A549 (cell line): ENCODE measurements at regions of chr20 and their contacts with region 1.

Region 1: GRCh38 chr20:47501483-47502270 is at the start of gene NCOA3:
- DNase-seq: peak; percentile 95 to 96
- ATAC-seq: peak; percentile 94 to 98
- H3K4me3 ChIP-seq: peak within 1 kb of the TSS; percentile 67
- H3K27ac ChIP-seq: peak within 1 kb of the TSS; percentile 91 to 98
- H3K4me1 ChIP-seq: peaks cover 33% of the 10 kb centered on the region
- CTCF ChIP-seq: no peak; the same call in 2 of the 3 replicates
- EP300 ChIP-seq: no peak; a peak in 1 of 5 replicates
- POLR2A ChIP-seq: peak; percentile 91
- RAD21 ChIP-seq: peak; percentile 28 to 60; a peak in 4 of 5 replicates
- polyA plus RNA-seq, gene NCOA3: 135 and 136 TPM in 2 replicates

Region 2: DNA sequence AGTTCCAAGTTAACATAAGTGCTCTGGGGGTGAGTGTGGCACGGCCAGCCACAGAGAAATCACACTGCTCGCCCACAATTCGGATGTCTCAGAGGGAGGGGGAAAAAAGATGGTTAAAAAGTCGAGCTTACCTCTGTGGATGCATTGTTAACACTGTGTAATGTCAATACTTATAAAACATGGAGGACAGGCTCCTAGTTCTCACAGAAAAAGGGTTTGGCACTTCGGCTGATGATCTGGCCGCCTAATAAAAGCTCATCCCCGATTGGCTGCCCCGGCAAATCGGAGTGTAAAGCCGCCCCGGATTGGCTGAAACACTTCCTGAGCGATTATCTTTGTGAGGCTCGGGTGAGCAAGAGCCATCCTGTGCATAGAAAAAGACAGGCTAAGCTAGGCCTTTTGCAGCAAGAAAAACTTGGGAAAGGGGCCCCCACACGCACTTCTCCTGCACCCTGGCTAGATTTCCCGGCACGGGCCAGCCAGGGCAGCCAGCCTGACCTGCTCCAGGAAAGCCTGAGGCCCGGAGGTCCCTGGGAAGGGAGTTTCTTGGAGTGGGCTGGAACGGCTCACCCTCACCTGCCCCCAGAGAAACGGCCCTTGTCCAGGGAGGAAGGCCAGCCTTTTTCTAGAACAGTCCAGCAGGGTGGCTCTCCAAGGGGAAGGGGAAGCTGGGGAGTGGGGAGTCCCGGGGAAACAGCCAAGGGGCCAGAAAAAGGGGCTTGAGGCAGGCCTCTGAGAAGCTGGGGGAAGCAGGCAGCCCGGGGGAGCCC is 145.0 kb before region 1 on chr20 and contains the start of gene ZMYND8:
- CTCF ChIA-PET with region 1: no interaction called
- POLR2A ChIA-PET with region 1: interaction called, 17 read pairs
- DNase-seq: peak; percentile 90 to 94
- ATAC-seq: peak; percentile 8 to 45; a peak in 3 of 6 replicates
- H3K4me3 ChIP-seq: peak within 1 kb of the TSS; percentile 7; the same call in 1 of the 3 replicates
- H3K27ac ChIP-seq: peak within 1 kb of the TSS; percentile 100
- H3K4me1 ChIP-seq: peaks cover 98% of the 10 kb centered on the region
- CTCF ChIP-seq: no peak
- EP300 ChIP-seq: no peak
- POLR2A ChIP-seq: no peak
- RAD21 ChIP-seq: no peak
- polyA plus RNA-seq, gene ZMYND8: 23.6 and 24.9 TPM in 2 replicates

Region 3: DNA sequence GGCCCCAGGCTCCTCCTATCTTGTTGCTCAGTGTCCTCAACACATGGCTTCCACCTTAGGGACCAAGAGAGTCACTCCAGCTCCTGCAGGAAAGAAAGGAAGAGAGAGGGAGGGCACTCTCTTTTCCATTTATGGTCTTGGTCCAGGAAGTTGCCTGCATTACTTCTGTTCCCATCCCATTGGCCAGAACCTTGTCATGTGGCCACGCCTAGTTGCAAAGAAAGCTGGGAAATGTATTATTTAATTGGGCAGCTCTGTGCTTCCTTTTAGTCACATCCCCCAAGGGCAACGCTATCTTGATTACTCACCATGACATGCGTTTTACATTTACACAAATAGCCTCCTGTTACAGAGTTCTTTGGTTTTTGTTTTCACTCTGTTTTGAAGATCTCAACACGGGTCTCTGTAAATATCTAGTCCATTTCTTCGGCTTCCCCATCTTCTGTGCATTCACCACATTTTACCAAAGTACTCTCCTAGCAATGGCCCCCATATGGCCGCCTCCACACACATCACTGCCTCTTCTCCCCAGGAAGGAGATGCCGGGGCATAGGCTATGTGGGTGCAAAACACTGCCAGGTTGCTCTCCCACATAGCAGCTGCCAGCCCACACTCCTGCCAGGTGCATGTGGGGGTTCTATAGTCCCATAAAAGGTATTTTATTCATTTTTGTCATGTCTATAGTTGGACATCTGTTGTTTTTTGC is 109.5 kb before region 1 on chr20:
- CTCF ChIA-PET with region 1: interaction called, 7 read pairs
- POLR2A ChIA-PET with region 1: interaction called, 23 read pairs
- DNase-seq: peak; percentile 83 to 99
- ATAC-seq: peak; percentile 81 to 85
- H3K4me3 ChIP-seq: no peak overlapping the region
- H3K27ac ChIP-seq: peak overlapping the region; percentile 90 to 92
- H3K4me1 ChIP-seq: peaks cover 40% of the 10 kb centered on the region
- CTCF ChIP-seq: no peak
- EP300 ChIP-seq: no peak
- POLR2A ChIP-seq: no peak
- RAD21 ChIP-seq: peak in 1 of 2 experiments; percentile 28; a peak in 2 of 5 replicates

Region 4: GRCh38 chr20:47432211-47433210 is 69.2 kb before region 1 on chr20:
- CTCF ChIA-PET with region 1: no interaction called
- POLR2A ChIA-PET with region 1: interaction called, 15 read pairs
- DNase-seq: peak in 1 of 2 experiments; percentile 87
- ATAC-seq: peak; percentile 83 to 84
- H3K4me3 ChIP-seq: peak overlapping the region; percentile 18; the same call in 2 of the 3 replicates
- H3K27ac ChIP-seq: peak overlapping the region; percentile 75 to 82
- H3K4me1 ChIP-seq: peaks cover 31% of the 10 kb centered on the region
- CTCF ChIP-seq: no peak
- EP300 ChIP-seq: no peak
- POLR2A ChIP-seq: no peak
- RAD21 ChIP-seq: 0 out of 5 replicates have a peak, but pooled peaks have one; percentile 10 to 21

Region 5: DNA sequence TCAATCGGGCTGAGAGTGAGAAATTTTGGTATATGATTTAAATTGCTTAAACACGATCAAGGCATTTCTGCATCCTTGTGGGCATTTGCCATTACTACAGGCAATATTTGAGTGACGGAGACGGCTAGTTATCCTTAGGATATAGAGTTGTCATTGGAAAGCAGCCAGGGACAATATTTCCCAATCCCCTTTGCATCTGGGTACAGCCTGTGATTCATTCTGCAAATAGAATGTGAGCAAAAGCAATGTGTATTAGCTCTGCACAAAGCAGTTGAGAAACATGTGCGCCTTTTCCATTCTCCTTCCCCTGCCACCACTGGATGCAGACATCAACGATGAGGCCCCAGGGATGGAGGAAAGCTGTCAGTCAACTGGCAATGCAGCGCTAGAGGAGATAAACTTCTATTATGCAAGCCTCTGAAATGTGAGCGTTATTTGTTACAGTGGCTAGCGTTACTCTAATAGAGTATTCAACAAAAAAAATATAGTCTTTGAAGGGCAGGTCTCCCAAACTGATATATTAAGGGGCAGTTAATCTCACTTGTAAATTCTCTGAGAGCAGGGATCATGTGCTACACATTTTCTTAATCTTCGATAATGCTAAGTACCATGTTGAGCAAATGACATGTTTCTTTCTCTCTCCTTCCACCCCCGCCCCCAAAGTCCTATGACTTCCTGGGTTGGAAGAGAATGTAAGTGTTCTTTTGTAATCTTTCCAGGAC is 37.1 kb before region 1 on chr20:
- CTCF ChIA-PET with region 1: interaction called, 5 read pairs
- POLR2A ChIA-PET with region 1: interaction called, 21 read pairs
- DNase-seq: peak; percentile 97 to 99
- ATAC-seq: peak; percentile 97 to 98
- H3K4me3 ChIP-seq: no peak overlapping the region
- H3K27ac ChIP-seq: peak overlapping the region; percentile 88 to 95
- H3K4me1 ChIP-seq: peaks cover 46% of the 10 kb centered on the region
- CTCF ChIP-seq: no peak; the same call in 1 of the 3 replicates
- EP300 ChIP-seq: peak; percentile 93 to 96
- POLR2A ChIP-seq: no peak
- RAD21 ChIP-seq: peak; percentile 71 to 83

Region 6: GRCh38 chr20:47576516-47577033 is 74.9 kb after region 1 on chr20:
- CTCF ChIA-PET with region 1: interaction called, 6 read pairs
- POLR2A ChIA-PET with region 1: interaction called, 11 read pairs
- DNase-seq: peak; percentile 81 to 92
- ATAC-seq: peak; percentile 89 to 90
- H3K4me3 ChIP-seq: peak overlapping the region; percentile 25; the same call in 2 of the 3 replicates
- H3K27ac ChIP-seq: peak overlapping the region; percentile 69 to 85
- H3K4me1 ChIP-seq: peaks cover 79% of the 10 kb centered on the region
- CTCF ChIP-seq: no peak
- EP300 ChIP-seq: no peak
- POLR2A ChIP-seq: peak; percentile 33; the same call in 1 of the 2 replicates
- RAD21 ChIP-seq: 0 out of 5 replicates have a peak, but pooled peaks of 1 of the 2 experiments have one; percentile 37

Region 7: DNA sequence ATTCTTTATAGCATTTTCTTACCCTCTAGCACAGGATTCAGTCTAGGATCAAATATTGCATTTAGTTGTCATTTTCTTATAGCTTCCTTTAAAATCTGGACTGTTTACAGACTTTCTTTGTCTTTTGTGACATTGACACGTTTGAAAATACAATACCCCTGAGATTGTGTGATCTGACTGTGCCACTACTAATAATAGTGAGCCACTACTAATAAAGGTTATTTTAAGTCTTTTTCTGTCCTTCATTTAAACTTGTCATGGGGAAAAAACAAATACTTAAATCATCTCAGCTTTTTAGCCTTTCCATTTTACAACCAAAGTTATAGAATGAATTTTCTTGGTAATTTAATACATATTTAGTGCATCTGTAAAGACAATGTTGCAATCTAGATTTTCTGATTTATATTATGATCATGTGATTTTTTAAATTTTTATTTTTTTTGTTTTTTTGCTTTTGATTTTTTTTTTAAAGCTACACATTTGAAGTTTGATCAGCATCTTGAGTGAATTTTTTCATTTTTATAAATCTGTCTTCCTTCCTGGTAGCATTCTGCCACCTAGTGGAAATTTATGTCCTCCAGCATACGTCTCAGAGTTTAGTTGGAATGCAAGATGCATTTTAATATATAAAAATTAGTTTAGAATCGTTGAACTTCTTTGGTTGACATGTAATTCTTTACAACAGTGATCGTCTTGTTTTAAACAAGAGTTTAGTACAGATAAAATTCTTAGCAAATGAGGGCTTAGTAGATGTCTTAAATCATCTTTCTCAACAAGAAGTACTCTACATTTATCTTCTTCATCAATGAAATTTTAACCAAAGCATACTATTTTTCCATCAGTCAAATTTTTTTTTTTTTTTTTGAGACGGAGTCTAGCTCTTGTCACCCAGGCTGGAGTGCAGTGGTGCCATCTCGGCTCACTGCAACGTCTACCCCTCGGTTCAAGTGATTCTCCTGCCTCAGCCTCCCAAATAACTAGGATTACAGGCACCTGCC is 119.4 kb after region 1 on chr20:
- CTCF ChIA-PET with region 1: interaction called, 26 read pairs
- POLR2A ChIA-PET with region 1: interaction called, 5 read pairs
- DNase-seq: peak in 1 of 2 experiments; percentile 71
- ATAC-seq: peak; percentile 37 to 39; a peak in 2 of 6 replicates
- H3K4me3 ChIP-seq: no peak overlapping the region
- H3K27ac ChIP-seq: peak overlapping the region; percentile 58 to 60
- H3K4me1 ChIP-seq: peaks cover 47% of the 10 kb centered on the region
- CTCF ChIP-seq: peak; percentile 93
- EP300 ChIP-seq: no peak
- POLR2A ChIP-seq: no peak
- RAD21 ChIP-seq: peak; percentile 86 to 92